ENCODE measurements at regions of chr3 and their contacts with region 1.

Region 1: DNA sequence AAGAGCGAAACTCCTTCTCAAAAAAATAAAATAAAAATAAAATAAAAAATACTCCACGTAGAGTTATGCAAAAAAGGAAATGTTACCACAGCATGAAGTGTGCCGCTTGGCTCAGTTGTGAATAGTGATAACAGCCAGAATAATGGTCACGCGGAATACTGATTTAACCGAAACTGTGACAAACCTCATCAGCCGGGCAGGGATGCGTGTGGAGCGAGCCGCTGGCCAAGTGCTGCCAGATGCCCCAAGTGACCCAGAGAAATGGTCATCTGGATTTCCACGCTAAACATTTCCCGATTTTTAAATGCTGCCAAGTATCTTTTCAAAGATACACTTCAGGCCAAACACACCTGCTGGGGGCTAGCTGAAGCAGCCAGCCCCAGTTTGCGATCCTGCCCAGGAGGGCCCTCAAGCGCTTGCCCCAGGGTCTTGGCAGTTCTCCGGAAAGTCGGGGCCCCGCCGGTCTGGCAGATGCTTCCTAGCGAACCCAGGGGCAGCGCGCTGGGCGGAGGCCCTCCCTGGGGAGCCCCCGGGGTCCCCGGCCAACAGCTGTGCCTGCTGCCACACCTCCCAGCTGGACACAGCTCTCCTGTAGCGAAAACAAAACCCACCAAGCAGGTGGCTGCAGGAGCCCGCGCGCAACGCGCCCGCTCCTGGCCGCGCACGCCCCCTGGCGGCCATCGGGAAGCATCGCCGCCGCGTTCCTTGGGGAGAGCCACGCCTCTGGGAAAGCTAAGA is 35.1 kb downstream of the CMTM6 start:
- DNase-seq: peak; percentile 71
- ATAC-seq: peak; percentile 89 to 91

Region 2: DNA sequence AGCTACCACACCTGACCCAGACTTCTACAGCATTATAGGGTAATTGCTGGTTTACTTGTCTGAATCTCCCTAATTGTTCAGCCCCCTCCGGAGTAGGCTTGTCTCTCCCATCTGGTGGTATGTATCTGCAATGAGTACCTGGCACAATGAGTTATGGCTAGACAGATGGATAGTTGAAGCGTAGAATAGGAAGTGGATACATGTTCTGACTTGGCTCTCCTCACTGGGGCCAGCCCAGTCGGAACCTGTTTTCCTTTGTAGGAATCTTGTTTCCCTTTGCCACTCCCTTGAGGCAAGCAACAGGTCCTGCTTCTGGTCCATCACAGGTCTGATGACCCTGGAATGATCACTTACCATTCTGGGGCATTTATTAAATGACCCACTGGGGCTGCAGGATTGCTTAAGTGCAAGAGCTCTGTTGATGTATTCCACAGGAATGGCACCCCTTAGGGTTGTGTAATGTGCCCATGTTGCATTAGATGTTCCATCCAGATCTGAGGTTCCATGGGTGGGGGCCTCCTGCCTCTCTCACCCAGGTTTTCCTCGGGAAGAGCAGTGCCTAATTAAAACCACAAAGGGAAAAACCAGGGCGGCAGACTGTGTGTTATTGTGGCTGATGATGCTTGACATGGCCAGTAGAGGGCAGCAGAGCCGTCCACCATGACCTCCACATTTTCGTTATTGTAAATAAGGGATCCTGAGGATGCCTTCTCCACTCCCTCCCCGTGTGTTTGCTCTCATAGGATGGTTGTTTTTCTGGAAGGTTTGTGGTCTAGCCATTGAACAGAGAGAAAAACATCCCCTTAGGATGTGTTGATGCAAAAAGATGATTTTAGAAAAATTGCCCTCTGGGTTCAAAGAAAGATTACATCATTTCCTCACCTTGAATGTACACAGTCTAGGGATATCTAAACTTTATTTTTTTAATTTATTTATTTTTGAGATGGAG is 171.0 kb before region 1 on chr3:
- intact Hi-C with region 1: loop called in 1 of 2 experiments (anchors 5 kb)
- DNase-seq: peak; percentile 48
- ATAC-seq: peak; percentile 74 to 79

Region 3: GRCh38 chr3:32374788-32375595 is 92.5 kb before region 1 on chr3:
- intact Hi-C with region 1: loop called (anchors 2 to 5 kb)
- DNase-seq: peak; percentile 32
- ATAC-seq: peak; percentile 41 to 63

Region 4: DNA sequence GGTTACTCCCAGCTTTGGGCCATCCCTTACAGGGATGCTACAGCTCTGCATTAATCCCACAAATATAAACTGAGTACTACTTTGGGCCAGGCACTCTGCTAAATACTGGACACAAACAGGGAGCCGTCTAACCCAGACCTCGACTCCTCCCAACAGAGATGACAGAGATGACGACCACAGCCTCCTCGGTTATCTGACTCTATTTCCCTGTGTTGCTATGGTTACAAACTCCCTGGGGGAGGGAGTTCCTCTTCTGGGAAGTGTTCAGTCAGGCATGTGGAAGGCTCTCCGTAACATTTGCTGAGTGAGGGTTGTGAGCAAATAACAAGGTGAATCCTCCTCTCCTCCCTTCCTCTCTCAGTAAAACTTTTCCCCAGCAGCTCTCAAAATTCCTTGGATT is 82.6 kb before region 1 on chr3:
- intact Hi-C with region 1: loop called in 1 of 2 experiments (anchors 5 kb)
- DNase-seq: peak; percentile 40
- ATAC-seq: peak; percentile 30 to 82

Region 5: DNA sequence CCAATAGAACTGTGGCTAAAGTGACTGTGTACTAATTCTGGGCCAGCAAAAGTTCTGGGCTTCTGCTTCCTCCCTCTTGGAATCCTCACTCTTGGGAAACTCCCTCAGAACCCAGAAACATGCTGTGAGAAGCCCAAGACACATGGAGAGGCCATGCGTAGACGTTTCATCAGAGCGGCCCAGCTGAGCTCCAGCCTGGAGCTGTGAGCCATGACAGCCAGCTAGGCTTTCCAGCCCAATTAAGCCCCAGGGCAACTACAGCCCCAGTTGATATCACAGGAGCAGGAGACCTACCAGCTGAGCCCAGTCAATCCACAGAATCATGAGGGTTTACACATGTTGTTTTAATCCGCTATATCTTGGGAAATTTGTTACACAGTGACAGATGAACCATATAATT is 173.9 kb after region 1 on chr3:
- intact Hi-C with region 1: no loop called
- DNase-seq: peak; percentile 44
- ATAC-seq: peak; percentile 88 to 93